Activated naive CD8-positive, alpha-beta T cell treated with anti-CD3 and anti-CD28 coated beads, Interleukin-2, amount 10 ng/mL, durations not matched to agents 7 days and 5 days (primary cell): ENCODE measurements at regions of chr4 and their contacts with region 1.

Region 1: DNA sequence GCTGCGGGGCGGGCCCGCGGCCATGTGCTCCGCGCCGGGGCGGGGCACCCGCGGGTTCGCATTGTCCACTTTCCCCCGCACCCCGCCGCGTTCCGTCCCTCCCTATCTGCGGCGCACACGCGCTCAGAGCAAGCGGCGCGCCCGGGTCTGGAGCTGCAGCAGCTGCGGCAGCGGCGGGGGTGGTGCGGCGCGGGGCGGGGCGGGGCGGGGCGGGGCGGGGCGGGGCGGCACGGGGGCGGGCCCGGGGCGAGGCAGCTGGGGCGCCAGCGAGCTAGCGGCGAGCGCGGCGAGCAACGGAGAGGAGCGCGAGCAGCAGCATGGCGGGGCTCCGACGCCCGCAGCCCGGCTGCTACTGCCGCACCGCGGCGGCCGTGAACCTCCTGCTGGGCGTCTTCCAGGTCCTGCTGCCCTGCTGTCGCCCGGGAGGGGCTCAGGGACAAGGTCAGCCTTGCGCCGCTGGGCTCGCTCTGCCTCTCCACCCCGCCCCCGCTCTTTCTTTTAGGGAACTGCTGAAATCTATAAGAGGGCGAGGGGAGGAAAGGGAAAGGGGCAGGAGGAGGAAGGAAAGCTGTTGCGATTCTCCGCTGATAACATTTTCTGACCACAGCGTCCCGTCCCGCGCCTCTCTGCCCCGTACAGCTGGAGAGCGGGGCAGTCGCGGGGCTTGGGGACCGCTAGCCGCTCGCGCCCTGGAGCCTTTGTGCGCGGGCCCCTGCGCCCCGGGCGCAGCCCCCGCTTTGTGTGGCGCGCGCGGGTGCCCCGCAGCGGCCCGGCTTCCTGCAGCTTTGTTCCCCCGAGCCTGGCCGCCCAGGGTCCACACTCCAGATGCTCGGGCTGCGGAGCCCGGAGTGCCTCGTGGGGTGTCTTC is at the start of gene TMEM131L:
- DNase-seq: peak; percentile 81
- ATAC-seq: peak; percentile 73
- H3K4me3 Mint-ChIP-seq: peak within 1 kb of the TSS; percentile 96
- H3K27ac Mint-ChIP-seq: peak within 1 kb of the TSS; percentile 96
- H3K4me1 Mint-ChIP-seq: peaks cover 38% of the 10 kb centered on the region
- H3K27me3 Mint-ChIP-seq: no peaks in the 10 kb centered on the region
- total RNA-seq, gene TMEM131L: 51.8 to 57.2 TPM

Region 2: GRCh38 chr4:153426207-153426885 is 40.0 kb before region 1 on chr4:
- POLR2A ChIA-PET with region 1: interaction called, 50 read pairs
- DNase-seq: no peak
- ATAC-seq: peak; percentile 72
- H3K4me3 Mint-ChIP-seq: peak overlapping the region; percentile 82
- H3K27ac Mint-ChIP-seq: peak overlapping the region; percentile 95
- H3K4me1 Mint-ChIP-seq: peaks cover 52% of the 10 kb centered on the region
- H3K27me3 Mint-ChIP-seq: no peaks in the 10 kb centered on the region

Region 3: GRCh38 chr4:153438916-153439756 is 27.2 kb before region 1 on chr4:
- POLR2A ChIA-PET with region 1: interaction called, 58 read pairs
- DNase-seq: peak; percentile 50
- ATAC-seq: peak; percentile 87
- H3K4me3 Mint-ChIP-seq: peak overlapping the region; percentile 81
- H3K27ac Mint-ChIP-seq: peak overlapping the region; percentile 86
- H3K4me1 Mint-ChIP-seq: peaks cover 36% of the 10 kb centered on the region
- H3K27me3 Mint-ChIP-seq: no peaks in the 10 kb centered on the region

Region 4: DNA sequence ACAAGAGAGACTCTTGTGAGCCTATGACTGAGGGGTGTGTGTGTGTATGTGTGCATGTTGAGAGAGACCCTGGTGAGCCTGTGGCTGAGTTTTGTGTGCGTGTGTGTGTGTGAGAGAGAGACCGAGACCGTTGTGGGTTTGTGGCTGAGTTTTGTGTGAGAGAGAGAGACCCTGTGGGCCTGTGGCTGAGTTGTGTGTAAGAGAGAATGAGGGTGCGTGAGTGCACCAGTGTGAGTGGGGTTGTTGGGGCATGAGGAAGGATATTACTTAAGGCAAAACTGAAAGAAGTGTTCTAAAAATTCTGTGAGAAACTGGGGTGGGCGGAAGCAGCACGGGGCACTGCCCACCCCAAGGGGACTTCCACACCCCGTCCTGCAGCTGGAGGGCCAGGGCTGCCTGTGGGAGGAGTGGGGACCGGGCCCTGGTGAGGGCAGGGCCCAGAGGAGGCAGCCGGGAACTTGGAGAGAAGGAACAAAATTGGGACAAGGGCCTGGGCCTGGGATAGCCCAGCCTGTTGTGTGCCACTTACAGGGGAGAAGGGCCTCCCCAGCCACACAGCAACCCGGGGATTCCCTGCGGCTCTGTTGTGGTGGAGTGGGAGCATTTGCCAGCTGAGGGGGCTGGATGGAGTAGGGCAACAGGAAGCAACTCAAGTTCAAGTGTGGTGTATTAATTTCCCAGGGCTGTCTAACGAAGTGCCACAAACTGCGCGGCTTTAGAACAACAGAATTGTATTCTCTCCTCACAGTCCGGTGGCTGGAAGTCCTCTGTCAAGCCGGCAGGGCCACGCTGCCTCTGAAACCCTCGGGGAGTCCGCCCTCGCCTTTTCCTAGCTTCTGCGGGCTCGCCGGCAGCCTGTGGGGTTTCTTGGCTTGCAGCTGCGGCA is 21.9 kb after region 1 on chr4:
- POLR2A ChIA-PET with region 1: interaction called, 72 read pairs
- DNase-seq: peak; percentile 79
- ATAC-seq: peak; percentile 61
- H3K4me3 Mint-ChIP-seq: peak overlapping the region; percentile 82
- H3K27ac Mint-ChIP-seq: peak overlapping the region; percentile 95
- H3K4me1 Mint-ChIP-seq: peaks cover 66% of the 10 kb centered on the region
- H3K27me3 Mint-ChIP-seq: no peaks in the 10 kb centered on the region

Region 5: GRCh38 chr4:153521999-153522801 is 55.9 kb after region 1 on chr4:
- POLR2A ChIA-PET with region 1: interaction called, 45 read pairs
- DNase-seq: peak; percentile 78
- ATAC-seq: peak; percentile 88
- H3K4me3 Mint-ChIP-seq: peak overlapping the region; percentile 72
- H3K27ac Mint-ChIP-seq: peak overlapping the region; percentile 88
- H3K4me1 Mint-ChIP-seq: peaks cover 83% of the 10 kb centered on the region
- H3K27me3 Mint-ChIP-seq: no peaks in the 10 kb centered on the region